ENCODE measurements at regions of chr11 and their contacts with region 1.

Region 1: DNA sequence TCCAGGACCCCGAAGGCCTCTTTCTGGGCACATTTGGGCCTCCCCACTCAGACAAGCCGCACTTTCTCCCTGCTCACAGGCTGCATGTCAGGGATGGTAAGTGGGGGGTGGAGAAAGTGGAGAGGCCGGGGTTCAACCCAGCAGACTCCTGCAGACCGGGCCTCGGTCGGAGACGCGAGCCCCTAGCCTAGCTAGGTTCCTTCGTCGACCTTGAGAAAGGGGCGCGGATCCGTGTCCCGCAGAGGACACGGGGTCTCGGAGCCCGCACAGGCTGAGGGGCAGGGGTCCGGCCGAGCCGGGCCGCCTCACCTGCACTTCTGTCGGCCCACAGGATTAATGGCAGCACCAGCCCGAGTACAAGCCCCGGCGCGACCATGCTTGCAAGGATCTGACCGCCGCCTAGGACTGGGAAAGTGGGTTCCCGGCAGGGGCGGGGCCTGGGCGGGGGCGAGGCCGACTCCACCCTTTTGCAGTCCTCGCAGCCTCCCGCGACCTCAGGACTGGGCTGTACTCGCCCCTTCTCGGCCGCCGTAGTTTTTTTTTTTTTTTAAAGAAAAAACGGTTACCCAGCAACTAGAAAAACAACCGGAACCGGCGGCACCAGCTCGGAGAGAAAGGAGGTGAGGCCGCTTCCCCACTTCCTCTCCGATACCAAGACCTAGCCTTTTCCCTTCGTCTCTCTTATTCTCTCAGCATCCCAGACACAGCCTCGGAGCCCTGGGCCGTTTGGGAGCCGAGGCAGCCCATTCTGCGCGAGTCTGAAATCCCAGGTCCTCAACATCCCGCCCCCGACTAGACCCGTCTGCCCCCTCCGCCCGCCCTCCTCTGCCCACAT is at the starts of genes SIAE and SPA17:
- DNase-seq: peak; percentile 96
- ATAC-seq: peak; percentile 98 to 100 (median 99)
- H3K4me3 ChIP-seq: peak within 1 kb of the TSS; percentile 65 to 86 (median 70)
- H3K27ac ChIP-seq: peak within 1 kb of the TSS; percentile 61 to 97 (median 89)
- H3K4me1 ChIP-seq: peaks cover 3 to 44% (median 27%) of the 10 kb centered on the region in 9 donors
- H3K27me3 ChIP-seq: no peaks in the 10 kb centered on the region
- CTCF ChIP-seq: no peak
- total RNA-seq, gene SIAE: 67.0 to 92.9 (median 74.3) TPM
- total RNA-seq, gene SPA17: 0.62 to 4.9 (median 2.0) TPM

Region 2: DNA sequence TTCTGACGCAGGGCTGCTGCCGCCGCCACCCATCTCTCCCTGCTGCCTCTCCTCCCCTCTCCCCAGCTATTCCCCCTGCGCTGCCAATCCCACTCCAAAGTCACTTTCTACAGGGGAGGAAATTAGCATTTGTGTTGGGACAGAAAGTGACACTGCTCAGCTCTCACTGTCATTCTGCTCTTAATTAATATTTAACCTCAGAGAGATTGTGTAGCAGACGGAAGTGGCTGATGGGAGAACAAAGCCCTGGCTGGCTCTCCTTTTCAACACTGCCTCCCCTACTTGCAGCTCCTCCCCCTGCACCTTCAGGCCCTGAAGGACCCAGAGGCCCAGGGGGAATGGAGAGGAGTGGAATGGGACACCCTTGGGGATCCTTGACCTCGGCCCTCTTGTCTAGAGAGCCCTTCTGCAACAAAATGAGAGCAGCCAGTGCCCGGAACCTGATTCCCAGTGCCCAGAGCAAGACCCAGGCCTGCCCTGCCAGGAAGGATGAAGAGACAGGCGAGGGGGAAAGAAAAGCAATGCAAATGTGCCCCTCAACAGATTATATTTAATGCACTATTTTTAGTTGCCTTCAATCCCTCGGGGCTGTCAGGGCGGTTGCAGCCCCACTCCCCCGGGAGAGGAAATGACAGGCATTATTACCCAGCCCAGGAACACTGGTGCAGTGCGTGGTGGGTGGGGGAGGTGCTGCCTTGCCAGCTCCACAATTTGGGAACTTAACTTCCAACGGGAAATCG is 51.6 kb after region 1 on chr11:
- intact Hi-C with region 1: loop called in 2 of 10 experiments (anchors 2 to 5 kb)
- DNase-seq: peak in 1 of 2 donors; percentile 33
- ATAC-seq: peak; percentile 22 to 72 (median 51)
- H3K4me3 ChIP-seq: peak overlapping the region in 1 of 10 donors; percentile 7
- H3K27ac ChIP-seq: peak overlapping the region in 7 of 10 donors; percentile 3 to 58 (median 40)
- H3K4me1 ChIP-seq: peaks cover 0 to 34% (median 16%) of the 10 kb centered on the region in 9 donors
- H3K27me3 ChIP-seq: peaks cover 0 to 53% (median 34%) of the 10 kb centered on the region in 7 donors
- CTCF ChIP-seq: no peak

Region 3: DNA sequence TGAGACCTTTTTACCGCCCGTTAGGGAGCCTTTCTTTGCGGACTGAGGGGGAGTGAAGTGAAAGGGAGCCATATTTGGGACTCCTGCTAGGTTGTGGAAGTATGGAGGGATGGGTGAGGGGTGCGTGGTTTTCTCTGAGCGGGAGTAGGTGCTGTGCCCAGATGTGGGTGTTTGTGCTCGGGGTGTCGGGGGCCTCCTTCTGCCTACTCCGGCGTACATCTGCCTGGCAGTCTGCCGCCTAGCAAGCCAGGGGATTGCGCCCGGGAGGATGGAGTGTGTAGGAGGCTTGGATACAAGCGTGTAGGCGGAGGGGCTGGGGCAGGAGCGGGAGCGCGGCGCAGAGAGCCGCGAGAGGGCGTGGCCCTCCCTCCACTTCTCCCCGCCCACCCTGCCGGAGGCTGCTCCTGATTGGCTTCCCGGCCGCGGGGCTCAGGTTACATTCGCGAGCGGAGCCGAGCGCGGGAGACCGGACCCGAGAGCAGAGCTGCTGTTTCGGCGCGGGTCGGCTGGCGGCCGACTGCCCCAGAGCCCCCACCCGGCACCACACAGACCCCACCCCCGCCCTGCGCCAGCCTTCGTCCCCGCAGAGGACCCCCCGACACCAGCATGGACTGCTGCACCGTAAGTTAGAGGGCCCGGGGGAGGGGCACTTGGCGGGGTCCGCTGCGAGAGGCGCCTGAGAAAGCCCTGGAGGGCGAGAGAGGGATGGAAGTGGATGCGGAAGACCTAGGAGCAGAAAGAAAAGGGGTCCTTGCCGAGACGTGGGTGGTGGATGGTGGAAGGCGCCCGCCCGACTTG is 66.1 kb after region 1 on chr11 and contains the start of gene NRGN:
- intact Hi-C with region 1: loop called in 6 of 10 experiments (anchors 5 to 10 kb)
- DNase-seq: peak; percentile 93
- ATAC-seq: peak; percentile 98 to 99 (median 99)
- H3K4me3 ChIP-seq: peak within 1 kb of the TSS; percentile 48 to 69 (median 62)
- H3K27ac ChIP-seq: peak within 1 kb of the TSS in 5 of 10 donors; percentile 16 to 54 (median 30)
- H3K4me1 ChIP-seq: peaks cover 0 to 37% (median 19%) of the 10 kb centered on the region in 9 donors
- H3K27me3 ChIP-seq: peaks cover 0 to 43% (median 27%) of the 10 kb centered on the region in 7 donors
- CTCF ChIP-seq: peak in 2 of 9 donors; percentile 11 to 13
- total RNA-seq, gene NRGN: 1.5 to 7.8 (median 4.1) TPM

Region 4: GRCh38 chr11:124758317-124759203 is 85.0 kb after region 1 on chr11:
- intact Hi-C with region 1: loop called in 9 of 10 experiments (anchors 1 to 5 kb)
- DNase-seq: peak; percentile 70 to 78
- ATAC-seq: peak; percentile 28 to 58 (median 50)
- H3K4me3 ChIP-seq: peak overlapping the region; percentile 31 to 94 (median 78)
- H3K27ac ChIP-seq: peak overlapping the region; percentile 76 to 99 (median 95)
- H3K4me1 ChIP-seq: peaks cover 14 to 87% (median 72%) of the 10 kb centered on the region in 9 donors
- H3K27me3 ChIP-seq: peaks cover 0 to 76% (median 57%) of the 10 kb centered on the region in 7 donors
- CTCF ChIP-seq: peak; percentile 61 to 81 (median 73)

Region 5: DNA sequence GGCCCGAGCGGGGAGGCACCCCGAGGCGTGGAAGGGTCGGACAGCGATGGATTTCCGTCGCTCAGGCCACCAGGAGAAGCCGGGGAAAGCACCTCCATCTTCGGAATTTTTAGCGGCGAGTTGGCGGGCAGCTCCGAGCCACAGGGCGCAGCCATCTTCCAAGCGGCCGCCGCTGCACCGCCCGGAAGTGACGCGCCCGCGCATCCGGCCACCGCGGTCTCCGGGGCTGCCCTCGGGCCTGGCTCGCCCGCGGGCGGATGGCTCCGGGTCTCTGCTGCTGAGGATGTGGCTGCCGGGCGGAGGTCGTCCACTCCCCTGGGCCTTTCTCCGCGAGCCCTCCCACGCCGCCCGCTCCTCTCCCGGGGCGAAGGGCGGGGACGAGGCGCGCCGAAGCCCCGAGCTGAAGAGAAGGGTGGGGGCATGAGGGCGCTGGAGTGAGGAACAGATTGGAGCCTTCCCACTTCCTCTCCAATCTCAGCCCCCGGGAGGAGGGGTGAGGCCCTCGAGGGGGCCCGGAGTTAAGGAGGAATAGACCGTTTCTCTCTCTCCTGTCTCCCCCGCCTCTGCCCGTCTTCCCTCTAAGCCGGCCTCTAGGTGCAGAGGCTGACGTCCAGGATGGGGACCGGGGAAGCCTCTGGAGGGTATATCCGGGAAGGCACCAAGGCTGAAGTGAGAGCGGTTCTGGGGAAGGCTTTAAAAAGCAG is 126.8 kb after region 1 on chr11 and contains the start of gene MSANTD2:
- intact Hi-C with region 1: loop called in 1 of 10 experiments (anchors 10 kb)
- DNase-seq: peak; percentile 83 to 86
- ATAC-seq: peak; percentile 96 to 99 (median 98)
- H3K4me3 ChIP-seq: peak within 1 kb of the TSS; percentile 65 to 93 (median 84)
- H3K27ac ChIP-seq: peak within 1 kb of the TSS; percentile 94 to 100 (median 98)
- H3K4me1 ChIP-seq: peaks cover 5 to 37% (median 33%) of the 10 kb centered on the region in 9 donors
- H3K27me3 ChIP-seq: peaks cover 0 to 4% (median 0%) of the 10 kb centered on the region in 7 donors
- CTCF ChIP-seq: no peak
- total RNA-seq, gene MSANTD2: 2.4 to 4.6 (median 3.1) TPM